ENCODE measurements at regions of chrX and their contacts with region 1.

Region 1: DNA sequence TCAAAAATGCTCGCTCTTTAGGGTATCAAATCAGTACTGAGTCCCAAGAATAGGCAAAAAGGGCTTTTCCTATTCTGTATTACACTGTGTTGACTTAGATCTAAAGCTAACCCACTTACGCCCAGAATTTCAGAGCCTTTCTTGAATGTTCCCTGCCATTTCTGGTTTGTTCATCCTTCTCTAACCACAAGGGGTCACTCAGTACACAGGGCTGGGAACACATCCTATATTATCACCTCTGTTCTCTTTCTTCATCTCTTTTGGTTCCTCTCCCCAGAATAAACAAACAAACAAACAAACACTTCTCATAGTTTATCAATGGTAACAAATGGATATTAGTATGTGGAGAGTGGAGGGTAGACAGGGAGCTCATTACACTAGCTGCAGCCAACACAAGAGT is 25.5 kb upstream of the MORC4 start:
- DNase-seq: no peak
- H3K4me3 ChIP-seq: no peak overlapping the region
- H3K27ac ChIP-seq: no peak overlapping the region
- H3K4me1 ChIP-seq: no peaks in the 10 kb centered on the region
- H3K27me3 ChIP-seq: no peaks in the 10 kb centered on the region
- CTCF ChIP-seq: peak; percentile 73

Region 2: GRCh38 chrX:106973433-106974149 is 52.0 kb before region 1 on chrX:
- CTCF ChIA-PET with region 1: no interaction called
- POLR2A ChIA-PET with region 1: no interaction called
- intact Hi-C with region 1: no loop called
- DNase-seq: no peak
- H3K4me3 ChIP-seq: no peak overlapping the region
- H3K27ac ChIP-seq: no peak overlapping the region
- H3K4me1 ChIP-seq: no peaks in the 10 kb centered on the region
- H3K27me3 ChIP-seq: no peaks in the 10 kb centered on the region
- CTCF ChIP-seq: no peak

Region 3: DNA sequence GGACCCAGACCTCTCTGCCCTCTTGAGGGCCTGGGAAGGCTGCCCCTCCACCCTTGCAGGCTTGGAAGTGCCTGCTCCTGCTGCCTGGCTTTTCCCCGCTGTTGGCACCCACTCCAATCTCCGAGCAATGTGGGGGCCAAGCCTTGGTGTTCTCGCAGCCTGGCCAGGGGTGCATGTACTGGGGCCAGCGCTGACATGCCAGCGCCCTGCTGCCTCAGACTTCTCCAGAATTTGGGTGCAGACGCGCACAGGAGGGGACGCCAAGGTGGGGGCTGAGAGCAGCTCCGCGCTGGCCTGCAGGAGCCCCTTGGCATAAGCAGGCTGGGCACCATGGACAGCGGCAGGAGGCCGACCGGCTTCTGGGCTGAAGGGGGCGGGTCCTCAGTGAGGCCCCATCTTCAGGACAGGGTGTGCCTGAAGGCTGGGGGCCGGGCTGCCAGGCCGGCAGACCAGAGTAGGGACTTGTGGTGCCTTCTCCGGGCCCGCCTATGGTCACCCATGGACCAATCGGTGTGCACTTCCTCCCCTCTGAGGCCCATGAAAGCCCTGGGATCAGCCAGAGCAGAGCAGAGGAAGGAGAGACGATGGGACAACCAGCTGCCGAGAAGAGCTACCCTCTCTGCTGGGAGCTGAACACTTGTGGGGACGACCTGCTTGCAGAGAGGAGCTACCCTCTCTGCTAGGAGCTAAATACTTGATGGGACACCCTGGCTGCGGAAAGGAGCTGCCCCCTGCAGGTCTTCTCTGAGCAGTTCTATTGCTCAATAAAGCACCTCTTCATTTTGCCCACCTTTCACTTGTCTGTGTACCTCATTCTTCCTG is 299.2 kb after region 1 on chrX:
- CTCF ChIA-PET with region 1: no interaction called
- POLR2A ChIA-PET with region 1: no interaction called
- intact Hi-C with region 1: loop called (anchors 10 kb)
- DNase-seq: peak in 1 of 2 experiments; percentile 42
- H3K4me3 ChIP-seq: no peak overlapping the region
- H3K27ac ChIP-seq: no peak overlapping the region
- H3K4me1 ChIP-seq: no peaks in the 10 kb centered on the region
- H3K27me3 ChIP-seq: 0 out of 2 replicates have a peak, but pooled peaks cover 11% of the 10 kb centered on the region
- CTCF ChIP-seq: peak; percentile 46; the same call in 1 of the 2 replicates

Region 4: DNA sequence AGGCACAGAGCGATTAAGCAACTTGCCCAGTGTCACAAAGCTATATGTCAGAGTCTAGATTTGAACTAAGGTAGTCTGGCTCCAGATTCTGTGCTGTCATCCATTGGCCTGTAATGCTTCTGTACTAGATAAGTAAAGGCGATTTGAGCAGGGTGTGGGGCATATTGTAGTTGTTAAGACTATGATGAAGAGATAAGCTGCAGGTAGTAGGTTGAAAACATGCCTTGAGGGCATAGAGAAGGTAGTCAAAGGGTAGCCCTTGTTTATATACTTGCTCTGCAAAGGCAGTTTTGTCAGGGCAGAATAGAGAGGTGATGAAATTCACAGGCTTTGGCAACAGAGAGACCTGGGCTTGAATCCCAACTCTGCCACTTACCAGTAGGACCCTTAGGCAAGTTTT is 413.9 kb after region 1 on chrX:
- CTCF ChIA-PET with region 1: no interaction called
- POLR2A ChIA-PET with region 1: no interaction called
- intact Hi-C with region 1: loop called (anchors 10 kb)
- DNase-seq: peak in 1 of 2 experiments; percentile 89
- H3K4me3 ChIP-seq: no peak overlapping the region
- H3K27ac ChIP-seq: no peak overlapping the region
- H3K4me1 ChIP-seq: peaks cover 51% of the 10 kb centered on the region
- H3K27me3 ChIP-seq: no peaks in the 10 kb centered on the region
- CTCF ChIP-seq: no peak

Region 5: DNA sequence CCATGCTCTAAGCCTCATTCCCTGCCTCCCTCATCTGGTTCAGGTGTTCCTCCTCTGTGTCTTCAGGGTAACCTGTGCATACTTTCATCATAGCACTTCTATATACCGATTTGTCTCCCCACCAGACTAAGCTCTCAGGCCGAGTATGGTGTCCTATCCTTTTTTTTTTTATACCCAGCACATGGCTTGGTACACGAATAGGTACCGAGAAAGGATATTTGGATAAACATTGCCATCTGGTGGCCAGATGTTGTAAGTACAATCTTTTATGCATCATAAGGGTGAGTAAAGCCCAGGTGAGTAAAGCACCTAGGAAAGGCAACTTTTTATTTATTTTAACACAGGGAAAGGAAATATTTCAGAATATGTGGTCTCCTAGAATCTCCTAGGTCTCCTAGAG is 868.5 kb after region 1 on chrX:
- CTCF ChIA-PET with region 1: no interaction called
- POLR2A ChIA-PET with region 1: no interaction called
- intact Hi-C with region 1: loop called (anchors 2 kb)
- DNase-seq: peak; percentile 32 to 74
- H3K4me3 ChIP-seq: no peak overlapping the region
- H3K27ac ChIP-seq: no peak overlapping the region
- H3K4me1 ChIP-seq: no peaks in the 10 kb centered on the region
- H3K27me3 ChIP-seq: no peaks in the 10 kb centered on the region
- CTCF ChIP-seq: peak; percentile 92

Measured in PC-9 (cell line).